ENCODE measurements at regions of chr11 and their contacts with region 1.

Region 1: GRCh38 chr11:100849009-100849900 is 162.2 kb downstream of the ARHGAP42 start:
- DNase-seq: no peak
- H3K4me3 ChIP-seq: no peak overlapping the region
- H3K27ac ChIP-seq: no peak overlapping the region
- H3K4me1 ChIP-seq: peaks cover 7% of the 10 kb centered on the region
- H3K27me3 ChIP-seq: no peaks in the 10 kb centered on the region
- CTCF ChIP-seq: no peak

Region 2: DNA sequence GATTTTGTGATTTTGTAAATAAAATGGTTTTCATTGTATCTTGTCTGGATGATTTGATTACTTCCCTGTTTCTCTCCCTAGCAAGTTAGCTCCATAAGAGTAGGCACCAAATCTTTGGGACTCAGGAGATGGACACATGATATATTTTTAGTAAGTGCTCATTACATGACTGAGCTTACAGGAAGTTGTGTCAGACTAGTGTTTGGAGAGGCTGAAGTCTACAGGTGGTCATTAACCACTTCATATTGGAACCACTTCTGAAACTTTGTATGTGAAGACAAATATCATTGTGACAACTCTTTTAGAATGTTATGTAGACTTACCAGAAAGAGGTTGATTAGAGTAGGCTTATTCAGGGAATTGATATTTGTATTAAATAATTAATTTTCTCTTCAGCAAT is 143.1 kb before region 1 on chr11:
- CTCF ChIA-PET with region 1: no interaction called
- POLR2A ChIA-PET with region 1: interaction called, 30 read pairs
- intact Hi-C with region 1: no loop called
- DNase-seq: no peak
- H3K4me3 ChIP-seq: no peak overlapping the region
- H3K27ac ChIP-seq: no peak overlapping the region
- H3K4me1 ChIP-seq: peaks cover 14% of the 10 kb centered on the region
- H3K27me3 ChIP-seq: no peaks in the 10 kb centered on the region
- CTCF ChIP-seq: no peak

Region 3: GRCh38 chr11:101428918-101429317 is 579.7 kb after region 1 on chr11:
- CTCF ChIA-PET with region 1: interaction called, 12 read pairs
- POLR2A ChIA-PET with region 1: no interaction called
- intact Hi-C with region 1: no loop called
- DNase-seq: no peak
- H3K4me3 ChIP-seq: no peak overlapping the region
- H3K27ac ChIP-seq: no peak overlapping the region
- H3K4me1 ChIP-seq: no peaks in the 10 kb centered on the region
- H3K27me3 ChIP-seq: no peaks in the 10 kb centered on the region
- CTCF ChIP-seq: peak; percentile 64

Region 4: GRCh38 chr11:101553891-101554292 is 704.6 kb after region 1 on chr11:
- CTCF ChIA-PET with region 1: no interaction called
- POLR2A ChIA-PET with region 1: no interaction called
- intact Hi-C with region 1: no loop called
- DNase-seq: no peak
- H3K4me3 ChIP-seq: no peak overlapping the region
- H3K27ac ChIP-seq: no peak overlapping the region
- H3K4me1 ChIP-seq: no peaks in the 10 kb centered on the region
- H3K27me3 ChIP-seq: no peaks in the 10 kb centered on the region
- CTCF ChIP-seq: no peak